KBM-7 (cell line): ENCODE measurements at regions of chr17 and their contacts with region 1.

Region 1: DNA sequence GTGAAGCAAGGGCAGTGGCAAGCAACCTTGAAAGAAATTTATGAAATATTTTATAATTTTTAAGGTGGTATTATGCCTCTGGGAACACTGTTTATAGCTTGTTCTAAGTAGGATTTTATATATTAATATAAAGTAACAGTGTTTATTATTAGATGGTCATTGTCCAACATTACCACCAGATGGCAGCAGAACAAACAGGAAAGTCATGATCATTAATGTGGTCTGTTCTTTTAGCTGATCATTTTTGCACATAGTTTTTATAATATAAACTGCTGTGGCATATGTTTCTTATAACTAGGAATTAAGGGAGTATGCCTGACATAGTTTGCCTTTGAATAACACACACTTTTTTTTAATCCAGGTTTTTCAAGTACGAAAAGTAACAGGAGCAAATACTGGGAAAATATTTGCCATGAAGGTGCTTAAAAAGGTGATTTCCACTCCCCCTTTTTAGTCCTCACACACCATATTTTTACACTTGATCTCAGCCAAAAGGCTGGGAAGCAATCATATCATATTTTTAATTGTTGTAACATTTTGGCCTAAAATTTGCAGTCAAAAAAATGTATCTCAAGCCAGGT is 21.4 kb downstream of the RPS6KB1 start:
- DNase-seq: peak; percentile 28

Region 2: GRCh38 chr17:59734226-59734625 is 180.1 kb before region 1 on chr17:
- in situ Hi-C with region 1: no loop called
- DNase-seq: no peak

Region 3: DNA sequence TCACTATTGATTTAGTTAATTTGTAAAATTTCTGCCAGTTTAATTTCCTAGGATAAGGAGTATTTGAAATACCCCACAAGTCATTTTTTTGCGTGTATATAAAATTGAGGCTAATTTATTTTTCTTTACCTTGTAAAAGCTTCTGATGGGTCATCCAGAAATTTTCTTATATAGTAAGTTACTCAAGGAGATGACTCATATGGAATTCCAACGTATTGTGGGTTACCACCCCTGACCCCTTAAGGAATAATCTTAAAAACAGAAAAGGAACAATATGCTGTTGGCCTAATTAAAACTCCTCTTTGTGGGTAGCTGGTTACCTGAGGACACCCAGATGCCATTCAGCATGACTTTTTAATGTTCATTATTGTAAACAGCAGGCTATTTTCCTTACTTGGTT is 150.8 kb after region 1 on chr17:
- in situ Hi-C with region 1: loop called (anchors 25 kb)
- DNase-seq: no peak